ENCODE measurements at regions of chr14 and their contacts with region 1.

Region 1: GRCh38 chr14:55373784-55374705 is 37.6 kb downstream of the ATG14 start:
- DNase-seq: peak; percentile 81
- H3K4me3 Mint-ChIP-seq: peak overlapping the region; percentile 72
- H3K27ac Mint-ChIP-seq: peak overlapping the region; percentile 95
- H3K4me1 Mint-ChIP-seq: peaks cover 31% of the 10 kb centered on the region
- H3K27me3 Mint-ChIP-seq: no peaks in the 10 kb centered on the region

Region 2: DNA sequence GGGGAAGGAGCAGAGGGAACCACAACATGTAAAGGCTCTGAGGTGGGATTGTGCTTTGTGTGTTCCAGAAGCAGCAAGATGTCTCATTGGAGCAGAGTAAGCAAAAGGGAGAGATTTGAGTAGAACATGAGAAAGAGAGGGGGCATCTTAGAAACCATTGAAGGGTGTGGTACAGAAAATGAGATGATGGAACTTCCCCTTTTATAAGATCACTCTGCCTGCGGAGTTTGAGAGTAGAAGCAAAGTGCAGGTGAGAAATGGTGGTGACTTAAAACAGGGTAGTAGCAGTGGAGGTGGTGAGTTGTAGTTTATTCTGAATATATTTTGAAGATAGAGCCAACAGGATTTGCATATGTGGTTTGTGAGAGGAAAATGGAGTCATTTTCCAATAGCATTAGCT is 46.9 kb before region 1 on chr14:
- intact Hi-C with region 1: loop called (anchors 1 kb)
- DNase-seq: no peak
- H3K4me3 Mint-ChIP-seq: no peak overlapping the region
- H3K27ac Mint-ChIP-seq: peak overlapping the region; percentile 3
- H3K4me1 Mint-ChIP-seq: peaks cover 45% of the 10 kb centered on the region
- H3K27me3 Mint-ChIP-seq: no peaks in the 10 kb centered on the region

Region 3: GRCh38 chr14:55354500-55354899 is 19.5 kb before region 1 on chr14:
- intact Hi-C with region 1: loop called (anchors 2 kb)
- DNase-seq: peak; percentile 89
- H3K4me3 Mint-ChIP-seq: peak overlapping the region; percentile 70
- H3K27ac Mint-ChIP-seq: peak overlapping the region; percentile 93
- H3K4me1 Mint-ChIP-seq: peaks cover 33% of the 10 kb centered on the region
- H3K27me3 Mint-ChIP-seq: no peaks in the 10 kb centered on the region

Region 4: GRCh38 chr14:55411426-55412389 is 37.7 kb after region 1 on chr14 and contains the start of gene ATG14:
- intact Hi-C with region 1: loop called (anchors 1 kb)
- DNase-seq: peak; percentile 93
- H3K4me3 Mint-ChIP-seq: peak within 1 kb of the TSS; percentile 91
- H3K27ac Mint-ChIP-seq: peak within 1 kb of the TSS; percentile 92
- H3K4me1 Mint-ChIP-seq: peaks cover 26% of the 10 kb centered on the region
- H3K27me3 Mint-ChIP-seq: peaks cover 4% of the 10 kb centered on the region
- total RNA-seq, gene ATG14: 4.9 and 5.8 TPM in 2 replicates

Region 5: GRCh38 chr14:57060276-57060955 is 1686.4 kb after region 1 on chr14:
- intact Hi-C with region 1: loop called (anchors 5 kb)
- DNase-seq: peak; percentile 76
- H3K4me3 Mint-ChIP-seq: peak overlapping the region; percentile 16
- H3K27ac Mint-ChIP-seq: peak overlapping the region; percentile 83
- H3K4me1 Mint-ChIP-seq: peaks cover 17% of the 10 kb centered on the region
- H3K27me3 Mint-ChIP-seq: peaks cover 13% of the 10 kb centered on the region

Measured in activated CD4-positive, alpha-beta T cell treated with anti-CD3 and anti-CD28 coated beads, Interleukin-2, amount 10 ng/mL, durations not matched to agents 24 days and 14 days (primary cell).